T-cell (primary cell): ENCODE measurements at regions of chr12 and their contacts with region 1.

Region 1: GRCh38 chr12:113974006-113974405 is 7.9 kb upstream of the RBM19 start:
- DNase-seq: no peak
- ATAC-seq: no peak
- H3K4me3 ChIP-seq: no peak overlapping the region
- H3K4me3 Mint-ChIP-seq: no peak overlapping the region
- H3K27ac ChIP-seq: no peak overlapping the region
- H3K27ac Mint-ChIP-seq: no peak overlapping the region
- H3K4me1 ChIP-seq: no peaks in the 10 kb centered on the region
- H3K4me1 Mint-ChIP-seq: peaks cover 0 to 8% (median 3%) of the 10 kb centered on the region in 3 donors
- H3K27me3 ChIP-seq: peaks cover 6 to 34% of the 10 kb centered on the region in 2 experiments
- H3K27me3 Mint-ChIP-seq: peaks cover 49 to 57% of the 10 kb centered on the region in 2 donors

Region 2: DNA sequence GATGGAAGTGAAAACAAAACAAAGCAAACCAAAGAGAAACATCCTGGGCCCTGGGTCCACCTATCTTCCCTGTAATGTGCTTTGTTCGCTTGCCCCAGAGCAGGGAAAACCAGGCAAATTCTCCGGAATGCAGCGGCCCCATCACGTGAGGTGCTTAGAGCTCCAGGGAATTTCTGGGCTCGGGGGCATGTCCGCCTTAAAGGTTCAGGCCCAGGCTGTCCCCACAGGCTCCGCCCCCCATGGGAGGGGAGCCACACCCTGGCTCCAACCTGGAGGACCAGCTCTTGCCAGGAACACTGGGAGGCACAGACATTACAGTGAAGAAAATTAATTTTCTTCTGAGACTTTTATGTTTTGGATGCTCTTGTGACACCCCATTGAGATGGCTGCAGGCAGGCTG is 77.8 kb before region 1 on chr12:
- CTCF ChIA-PET with region 1: no interaction called
- POLR2A ChIA-PET with region 1: interaction called in 1 of 2 experiments, 19 read pairs
- DNase-seq: no peak
- ATAC-seq: no peak
- H3K4me3 ChIP-seq: no peak overlapping the region
- H3K4me3 Mint-ChIP-seq: no peak overlapping the region
- H3K27ac ChIP-seq: no peak overlapping the region
- H3K27ac Mint-ChIP-seq: no peak overlapping the region
- H3K4me1 ChIP-seq: no peaks in the 10 kb centered on the region
- H3K4me1 Mint-ChIP-seq: no peaks in the 10 kb centered on the region
- H3K27me3 ChIP-seq: no peaks in the 10 kb centered on the region
- H3K27me3 Mint-ChIP-seq: no peaks in the 10 kb centered on the region

Region 3: DNA sequence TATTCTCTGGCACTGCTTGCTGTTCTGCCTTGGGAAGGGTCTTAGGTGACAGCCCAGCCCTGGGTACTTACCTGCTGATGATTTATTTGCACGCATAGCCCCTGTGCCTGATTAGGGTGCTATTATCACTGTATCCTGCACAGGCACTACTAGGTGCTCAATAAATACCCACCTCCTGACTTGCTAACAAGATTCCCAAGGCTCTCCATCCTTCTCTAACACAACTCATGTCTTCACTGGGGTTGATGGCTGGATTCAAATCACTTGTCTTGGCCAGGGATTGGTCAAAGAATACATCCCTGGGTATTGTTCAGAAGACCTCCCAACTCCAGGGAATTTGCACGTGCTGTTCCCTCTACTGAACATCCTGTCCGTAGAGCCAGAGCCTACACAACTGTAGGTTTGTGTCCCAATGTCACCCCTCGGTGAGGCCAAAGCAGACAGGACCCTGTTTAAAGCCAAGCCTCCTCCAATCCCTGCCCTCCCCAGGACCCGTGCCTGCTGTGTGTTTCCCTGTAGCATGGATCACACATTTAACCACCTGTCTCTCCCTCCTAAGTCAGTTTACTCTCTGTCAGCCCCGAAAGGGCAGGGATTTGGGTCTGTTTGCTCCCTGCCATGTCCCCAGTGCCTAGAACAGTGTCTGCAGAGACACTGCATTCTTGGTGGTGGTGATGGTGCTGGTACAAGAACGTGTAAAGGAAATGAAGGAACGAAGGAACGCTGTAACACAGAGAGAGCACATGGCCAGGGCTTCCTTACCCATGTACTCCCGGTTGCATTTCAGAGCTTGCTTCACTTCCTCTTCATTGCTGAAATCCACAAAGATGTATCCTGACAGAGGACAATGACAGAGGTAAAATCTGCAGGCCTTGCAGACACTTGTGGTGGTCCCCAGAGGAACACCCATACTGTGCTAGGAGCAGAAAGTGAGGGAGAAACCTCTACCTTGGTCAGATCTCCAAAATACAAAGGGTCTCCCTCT is 24.4 kb before region 1 on chr12:
- CTCF ChIA-PET with region 1: no interaction called
- POLR2A ChIA-PET with region 1: no interaction called
- DNase-seq: no peak
- ATAC-seq: no peak
- H3K4me3 ChIP-seq: no peak overlapping the region
- H3K4me3 Mint-ChIP-seq: no peak overlapping the region
- H3K27ac ChIP-seq: no peak overlapping the region
- H3K27ac Mint-ChIP-seq: no peak overlapping the region
- H3K4me1 ChIP-seq: no peaks in the 10 kb centered on the region
- H3K4me1 Mint-ChIP-seq: no peaks in the 10 kb centered on the region
- H3K27me3 ChIP-seq: no peaks in the 10 kb centered on the region
- H3K27me3 Mint-ChIP-seq: no peaks in the 10 kb centered on the region